ENCODE measurements at regions of chr18 and their contacts with region 1.

Region 1: GRCh38 chr18:36441426-36442240 is 144.1 kb downstream of the FHOD3 start:
- DNase-seq: no peak
- H3K4me3 ChIP-seq: no peak overlapping the region
- H3K27ac ChIP-seq: no peak overlapping the region
- H3K4me1 ChIP-seq: no peaks in the 10 kb centered on the region; a peak in 3 of 7 replicates
- H3K27me3 ChIP-seq: no peaks in the 10 kb centered on the region
- CTCF ChIP-seq: no peak
- EP300 ChIP-seq: no peak
- POLR2A ChIP-seq: no peak
- RAD21 ChIP-seq: no peak

Region 2: DNA sequence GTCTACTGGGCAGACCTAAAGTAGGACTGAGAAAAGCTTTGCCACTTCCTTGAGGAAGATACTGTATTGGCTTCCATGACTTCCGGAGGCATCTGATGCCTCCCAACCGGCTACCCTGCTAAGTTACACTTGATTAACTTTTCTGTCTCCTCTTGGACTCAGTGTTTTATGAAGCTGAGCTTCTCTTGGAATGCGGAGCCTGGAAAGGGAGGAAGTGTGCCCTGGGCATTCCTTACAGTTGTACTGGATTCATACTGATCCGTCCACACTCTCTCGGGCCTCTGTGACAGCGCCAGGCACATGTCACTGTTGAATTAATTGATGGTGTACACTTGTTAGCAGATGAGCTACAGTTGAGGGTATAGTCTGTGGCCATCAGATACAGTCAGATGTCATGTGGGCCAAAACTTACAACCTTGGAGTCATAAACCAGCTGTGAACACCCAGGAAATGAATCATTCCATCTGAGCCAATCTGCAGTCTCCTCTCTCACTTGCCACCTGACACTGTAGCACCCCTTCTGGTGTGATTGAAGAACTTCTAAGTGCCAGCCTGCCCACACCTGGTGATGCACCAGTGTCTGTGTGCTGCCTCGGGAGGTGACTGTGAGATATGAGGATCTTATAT is 21.6 kb before region 1 on chr18:
- CTCF ChIA-PET with region 1: interaction called, 163 read pairs
- POLR2A ChIA-PET with region 1: no interaction called
- DNase-seq: no peak
- H3K4me3 ChIP-seq: no peak overlapping the region
- H3K27ac ChIP-seq: no peak overlapping the region
- H3K4me1 ChIP-seq: peaks cover 0 to 3% (median 1%) of the 10 kb centered on the region in 4 experiments; a peak in 3 of 7 replicates
- H3K27me3 ChIP-seq: no peaks in the 10 kb centered on the region
- CTCF ChIP-seq: peak; percentile 48 to 62 (median 54)
- EP300 ChIP-seq: no peak
- POLR2A ChIP-seq: no peak
- RAD21 ChIP-seq: peak; percentile 26 to 50

Region 3: GRCh38 chr18:36633961-36634412 is 192.4 kb after region 1 on chr18:
- CTCF ChIA-PET with region 1: no interaction called
- POLR2A ChIA-PET with region 1: no interaction called
- DNase-seq: no peak
- H3K4me3 ChIP-seq: no peak overlapping the region
- H3K27ac ChIP-seq: no peak overlapping the region
- H3K4me1 ChIP-seq: peaks cover 2 to 12% (median 9%) of the 10 kb centered on the region in 4 experiments; a peak in 6 of 7 replicates
- H3K27me3 ChIP-seq: no peaks in the 10 kb centered on the region
- CTCF ChIP-seq: no peak
- EP300 ChIP-seq: no peak
- POLR2A ChIP-seq: no peak
- RAD21 ChIP-seq: no peak

Measured in H1 (cell line).